H1 (cell line): ENCODE measurements at regions of chr14 and their contacts with region 1.

Region 1: DNA sequence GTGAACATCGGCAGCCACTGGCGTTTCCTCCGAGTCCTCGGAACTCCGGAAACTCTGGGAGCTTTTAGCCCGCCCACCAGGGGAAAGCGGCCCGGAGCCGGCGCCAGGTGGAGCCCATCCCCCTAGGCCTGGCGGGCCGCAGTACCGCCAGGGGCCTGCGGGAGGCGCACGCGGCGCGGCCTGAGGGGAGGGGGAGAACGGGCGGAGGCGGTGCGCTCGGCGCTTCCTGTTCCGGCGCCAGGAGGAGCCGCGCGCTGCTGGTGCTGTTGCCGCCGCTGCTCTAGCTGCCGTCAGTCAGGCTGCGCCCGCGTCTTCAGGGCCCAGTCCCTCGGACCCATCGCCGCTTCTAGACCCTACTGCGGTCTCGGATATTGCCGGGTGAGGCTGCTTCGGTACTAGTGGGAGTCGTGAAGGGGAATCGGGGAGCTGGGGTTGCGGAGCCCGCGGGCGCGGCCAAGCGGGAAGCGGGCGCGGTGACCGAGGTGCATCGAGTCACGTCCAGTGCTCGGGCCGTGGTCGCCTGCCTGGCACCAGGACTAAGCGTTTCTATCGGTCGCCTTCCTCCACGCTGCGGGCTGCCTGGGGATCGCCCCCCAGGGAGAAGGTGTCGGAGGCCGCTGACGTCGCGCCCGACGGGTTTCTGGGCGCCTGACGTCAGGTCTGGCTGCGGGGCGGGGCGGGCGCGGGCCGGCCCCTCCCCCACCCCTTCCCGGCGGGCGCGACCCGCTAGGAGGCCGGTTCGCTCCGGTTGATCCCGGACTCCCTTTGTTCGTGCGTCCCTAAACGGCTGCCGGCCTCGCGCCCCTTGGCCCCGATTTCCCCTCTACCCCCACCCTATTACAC is at the start of gene MAPK1IP1L:
- DNase-seq: peak; percentile 79 to 99
- H3K4me3 ChIP-seq: peak within 1 kb of the TSS; percentile 77 to 97 (median 94)
- H3K27ac ChIP-seq: peak within 1 kb of the TSS; percentile 99
- H3K4me1 ChIP-seq: peaks cover 0 to 2% (median 0%) of the 10 kb centered on the region in 4 experiments; a peak in 5 of 7 replicates
- H3K27me3 ChIP-seq: no peaks in the 10 kb centered on the region
- CTCF ChIP-seq: peak; percentile 92 to 98 (median 98)
- EP300 ChIP-seq: peak; percentile 48 to 79; a peak in 2 of 3 replicates
- POLR2A ChIP-seq: peak; percentile 95 to 99
- RAD21 ChIP-seq: peak; percentile 58 to 62
- total RNA-seq, gene MAPK1IP1L: 111 and 113 TPM in 2 replicates

Region 2: GRCh38 chr14:54866588-54866987 is 185.1 kb before region 1 on chr14:
- CTCF ChIA-PET with region 1: no interaction called
- POLR2A ChIA-PET with region 1: no interaction called
- DNase-seq: no peak
- H3K4me3 ChIP-seq: no peak overlapping the region
- H3K27ac ChIP-seq: no peak overlapping the region
- H3K4me1 ChIP-seq: peaks cover 0 to 4% (median 0%) of the 10 kb centered on the region in 4 experiments; a peak in 2 of 7 replicates
- H3K27me3 ChIP-seq: no peaks in the 10 kb centered on the region
- CTCF ChIP-seq: no peak
- EP300 ChIP-seq: no peak
- POLR2A ChIP-seq: no peak
- RAD21 ChIP-seq: no peak

Region 3: GRCh38 chr14:55015006-55015405 is 36.6 kb before region 1 on chr14:
- CTCF ChIA-PET with region 1: interaction called, 4 read pairs
- POLR2A ChIA-PET with region 1: interaction called, 13 read pairs
- DNase-seq: no peak
- H3K4me3 ChIP-seq: no peak overlapping the region
- H3K27ac ChIP-seq: no peak overlapping the region
- H3K4me1 ChIP-seq: peaks cover 0 to 2% (median 0%) of the 10 kb centered on the region in 4 experiments; a peak in 1 of 7 replicates
- H3K27me3 ChIP-seq: no peaks in the 10 kb centered on the region
- CTCF ChIP-seq: no peak
- EP300 ChIP-seq: no peak
- POLR2A ChIP-seq: no peak
- RAD21 ChIP-seq: no peak

Region 4: GRCh38 chr14:55038708-55039107 is 12.9 kb before region 1 on chr14:
- CTCF ChIA-PET with region 1: interaction called, 16 read pairs
- POLR2A ChIA-PET with region 1: interaction called, 101 read pairs
- DNase-seq: no peak
- H3K4me3 ChIP-seq: no peak overlapping the region
- H3K27ac ChIP-seq: no peak overlapping the region
- H3K4me1 ChIP-seq: no peaks in the 10 kb centered on the region
- H3K27me3 ChIP-seq: peaks cover 0 to 2% (median 1%) of the 10 kb centered on the region in 4 experiments; a peak in 3 of 7 replicates
- CTCF ChIP-seq: no peak
- EP300 ChIP-seq: no peak
- POLR2A ChIP-seq: no peak
- RAD21 ChIP-seq: no peak

Region 5: GRCh38 chr14:55071870-55072640 is 20.4 kb after region 1 on chr14:
- CTCF ChIA-PET with region 1: interaction called, 9 read pairs
- POLR2A ChIA-PET with region 1: interaction called, 45 read pairs
- DNase-seq: no peak
- H3K4me3 ChIP-seq: no peak overlapping the region
- H3K27ac ChIP-seq: no peak overlapping the region
- H3K4me1 ChIP-seq: peaks cover 0 to 4% (median 1%) of the 10 kb centered on the region in 4 experiments; a peak in 4 of 7 replicates
- H3K27me3 ChIP-seq: peaks cover 0 to 1% (median 0%) of the 10 kb centered on the region in 4 experiments; a peak in 1 of 7 replicates
- CTCF ChIP-seq: no peak
- EP300 ChIP-seq: no peak
- POLR2A ChIP-seq: no peak
- RAD21 ChIP-seq: no peak

Region 6: DNA sequence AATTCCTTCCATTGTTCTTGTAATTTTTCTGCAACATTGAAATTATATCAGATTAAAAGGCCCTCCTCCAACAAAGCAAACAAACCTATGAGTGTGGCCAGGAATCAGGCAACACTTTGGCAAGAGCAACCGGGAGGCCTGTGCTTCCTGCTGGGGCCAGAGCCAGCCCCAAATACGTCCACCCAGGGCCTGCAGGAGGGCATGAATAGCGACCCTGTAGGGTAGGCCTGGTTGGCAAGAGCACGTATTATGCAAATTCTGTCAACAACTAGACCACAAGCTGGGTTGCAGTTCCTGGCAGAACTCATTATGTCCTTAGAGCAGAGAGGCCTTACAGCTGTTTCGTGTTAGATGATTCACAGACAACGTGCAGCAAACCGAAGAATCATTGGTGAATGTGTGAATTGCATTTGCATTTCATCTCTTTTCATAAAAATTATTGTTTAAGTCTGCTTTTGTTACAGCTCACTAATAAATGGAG is 50.5 kb after region 1 on chr14:
- CTCF ChIA-PET with region 1: interaction called, 6 read pairs
- POLR2A ChIA-PET with region 1: interaction called, 14 read pairs
- DNase-seq: peak in 1 of 2 experiments; percentile 49
- H3K4me3 ChIP-seq: peak overlapping the region in 1 of 4 experiments; percentile 34; a peak in 2 of 8 replicates
- H3K27ac ChIP-seq: no peak overlapping the region
- H3K4me1 ChIP-seq: peaks cover 7 to 19% (median 12%) of the 10 kb centered on the region in 4 experiments; a peak in 5 of 7 replicates
- H3K27me3 ChIP-seq: no peaks in the 10 kb centered on the region
- CTCF ChIP-seq: no peak
- EP300 ChIP-seq: no peak
- POLR2A ChIP-seq: peak in 1 of 2 experiments; percentile 49; a peak in 1 of 3 replicates
- RAD21 ChIP-seq: no peak

Region 7: GRCh38 chr14:55327179-55327578 is 275.5 kb after region 1 on chr14:
- CTCF ChIA-PET with region 1: no interaction called
- POLR2A ChIA-PET with region 1: no interaction called
- DNase-seq: no peak
- H3K4me3 ChIP-seq: no peak overlapping the region
- H3K27ac ChIP-seq: no peak overlapping the region
- H3K4me1 ChIP-seq: peaks cover 0 to 4% (median 0%) of the 10 kb centered on the region in 4 experiments; a peak in 1 of 7 replicates
- H3K27me3 ChIP-seq: no peaks in the 10 kb centered on the region
- CTCF ChIP-seq: no peak
- EP300 ChIP-seq: no peak
- POLR2A ChIP-seq: no peak
- RAD21 ChIP-seq: no peak